GM12878 (cell line): ENCODE measurements at regions of chr11 and their contacts with region 1.

Region 1: GRCh38 chr11:73335204-73335923 is 27.3 kb downstream of the ARHGEF17 start:
- DNase-seq: no peak
- ATAC-seq: peak; percentile 78
- H3K4me3 ChIP-seq: no peak overlapping the region
- H3K27ac ChIP-seq: 0 out of 2 replicates have a peak overlapping the region, but pooled peaks have one; percentile 40
- H3K4me1 ChIP-seq: peaks cover 14% of the 10 kb centered on the region
- H3K27me3 ChIP-seq: no peaks in the 10 kb centered on the region
- CTCF ChIP-seq: peak; percentile 98 to 99 (median 98); a peak in 5 of 6 replicates
- EP300 ChIP-seq: 0 out of 4 replicates have a peak, but pooled peaks of 1 of the 2 experiments have one; percentile 8
- POLR2A ChIP-seq: no peak
- RAD21 ChIP-seq: peak; percentile 100

Region 2: GRCh38 chr11:73184953-73185671 is 150.3 kb before region 1 on chr11:
- CTCF ChIA-PET with region 1: interaction called, 26 read pairs
- POLR2A ChIA-PET with region 1: no interaction called
- RAD21 ChIA-PET with region 1: interaction called, 6 read pairs
- SMC1A ChIA-PET with region 1: interaction called, 5 read pairs
- in situ Hi-C with region 1: no loop called
- intact Hi-C with region 1: loop called (anchors 2 kb)
- DNase-seq: no peak
- ATAC-seq: peak; percentile 86
- H3K4me3 ChIP-seq: no peak overlapping the region
- H3K27ac ChIP-seq: no peak overlapping the region
- H3K4me1 ChIP-seq: peaks cover 26% of the 10 kb centered on the region
- H3K27me3 ChIP-seq: no peaks in the 10 kb centered on the region
- CTCF ChIP-seq: peak; percentile 96 to 97 (median 97); a peak in 5 of 6 replicates
- EP300 ChIP-seq: no peak
- POLR2A ChIP-seq: no peak
- RAD21 ChIP-seq: peak; percentile 82

Region 3: GRCh38 chr11:73242251-73243079 is 92.9 kb before region 1 on chr11:
- CTCF ChIA-PET with region 1: interaction called, 7 read pairs
- POLR2A ChIA-PET with region 1: no interaction called
- RAD21 ChIA-PET with region 1: interaction called, 7 read pairs
- SMC1A ChIA-PET with region 1: interaction called, 10 read pairs
- in situ Hi-C with region 1: no loop called
- intact Hi-C with region 1: loop called (anchors 1 kb)
- DNase-seq: peak; percentile 48
- ATAC-seq: peak; percentile 97
- H3K4me3 ChIP-seq: no peak overlapping the region
- H3K27ac ChIP-seq: peak overlapping the region; percentile 46
- H3K4me1 ChIP-seq: peaks cover 18% of the 10 kb centered on the region
- H3K27me3 ChIP-seq: no peaks in the 10 kb centered on the region
- CTCF ChIP-seq: peak; percentile 73 to 90 (median 80)
- EP300 ChIP-seq: no peak
- POLR2A ChIP-seq: peak; percentile 53
- RAD21 ChIP-seq: peak; percentile 89

Region 4: GRCh38 chr11:73295231-73295995 is 40.0 kb before region 1 on chr11:
- CTCF ChIA-PET with region 1: interaction called, 326 read pairs
- POLR2A ChIA-PET with region 1: interaction called, 3 read pairs
- RAD21 ChIA-PET with region 1: interaction called, 227 read pairs
- SMC1A ChIA-PET with region 1: interaction called, 31 read pairs
- in situ Hi-C with region 1: loop called (anchors 5 kb)
- intact Hi-C with region 1: loop called (anchors 1 kb)
- DNase-seq: peak; percentile 31
- ATAC-seq: peak; percentile 92
- H3K4me3 ChIP-seq: no peak overlapping the region
- H3K27ac ChIP-seq: no peak overlapping the region
- H3K4me1 ChIP-seq: no peaks in the 10 kb centered on the region
- H3K27me3 ChIP-seq: no peaks in the 10 kb centered on the region; a peak in 2 of 4 replicates
- CTCF ChIP-seq: peak; percentile 92 to 99 (median 98)
- EP300 ChIP-seq: no peak
- POLR2A ChIP-seq: no peak
- RAD21 ChIP-seq: peak; percentile 79

Region 5: DNA sequence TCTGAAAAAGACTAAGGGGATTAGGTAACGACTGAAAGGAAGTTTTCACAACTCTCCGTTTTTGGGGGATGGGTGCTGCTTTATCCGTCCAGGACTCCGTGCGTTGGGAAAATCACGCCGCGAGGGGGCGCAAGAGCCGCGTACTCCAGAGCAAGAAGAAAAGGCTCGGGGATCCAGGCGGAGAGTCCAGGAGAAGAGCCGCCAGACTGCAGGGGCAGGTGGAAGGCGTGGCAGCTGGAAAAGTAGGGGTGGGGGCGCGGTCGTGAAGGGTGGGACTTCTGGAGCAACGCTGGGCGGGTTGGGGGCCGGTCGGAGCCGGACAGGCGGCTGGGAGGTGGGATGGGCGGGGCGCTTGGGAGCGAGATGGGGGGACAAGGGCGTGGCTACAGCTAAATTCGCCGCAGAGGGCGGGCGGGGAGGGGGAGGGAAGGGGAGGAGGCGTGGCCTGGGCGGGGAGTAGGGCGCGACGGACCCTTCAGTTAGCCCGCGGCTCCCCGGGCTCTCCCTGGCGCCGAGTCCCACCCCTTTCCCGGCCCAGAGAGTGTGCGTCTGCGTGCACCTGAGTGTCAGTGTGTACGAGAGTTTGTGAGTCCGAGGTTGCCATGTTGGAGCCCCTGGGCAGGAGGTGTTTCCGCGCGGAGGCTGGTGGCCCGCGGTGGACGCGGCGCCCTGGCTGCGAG is 27.9 kb before region 1 on chr11:
- CTCF ChIA-PET with region 1: interaction called, 326 read pairs
- POLR2A ChIA-PET with region 1: interaction called, 26 read pairs
- RAD21 ChIA-PET with region 1: interaction called, 227 read pairs
- SMC1A ChIA-PET with region 1: interaction called, 134 read pairs
- in situ Hi-C with region 1: no loop called
- intact Hi-C with region 1: loop called (anchors 1 kb)
- DNase-seq: peak; percentile 75
- ATAC-seq: peak; percentile 85
- H3K4me3 ChIP-seq: peak overlapping the region; percentile 76
- H3K27ac ChIP-seq: peak overlapping the region; percentile 69
- H3K4me1 ChIP-seq: peaks cover 7% of the 10 kb centered on the region; the same call in 1 of the 2 replicates
- H3K27me3 ChIP-seq: no peaks in the 10 kb centered on the region
- CTCF ChIP-seq: peak; percentile 81 to 95 (median 83)
- EP300 ChIP-seq: no peak
- POLR2A ChIP-seq: peak; percentile 77
- RAD21 ChIP-seq: peak; percentile 94

Region 6: DNA sequence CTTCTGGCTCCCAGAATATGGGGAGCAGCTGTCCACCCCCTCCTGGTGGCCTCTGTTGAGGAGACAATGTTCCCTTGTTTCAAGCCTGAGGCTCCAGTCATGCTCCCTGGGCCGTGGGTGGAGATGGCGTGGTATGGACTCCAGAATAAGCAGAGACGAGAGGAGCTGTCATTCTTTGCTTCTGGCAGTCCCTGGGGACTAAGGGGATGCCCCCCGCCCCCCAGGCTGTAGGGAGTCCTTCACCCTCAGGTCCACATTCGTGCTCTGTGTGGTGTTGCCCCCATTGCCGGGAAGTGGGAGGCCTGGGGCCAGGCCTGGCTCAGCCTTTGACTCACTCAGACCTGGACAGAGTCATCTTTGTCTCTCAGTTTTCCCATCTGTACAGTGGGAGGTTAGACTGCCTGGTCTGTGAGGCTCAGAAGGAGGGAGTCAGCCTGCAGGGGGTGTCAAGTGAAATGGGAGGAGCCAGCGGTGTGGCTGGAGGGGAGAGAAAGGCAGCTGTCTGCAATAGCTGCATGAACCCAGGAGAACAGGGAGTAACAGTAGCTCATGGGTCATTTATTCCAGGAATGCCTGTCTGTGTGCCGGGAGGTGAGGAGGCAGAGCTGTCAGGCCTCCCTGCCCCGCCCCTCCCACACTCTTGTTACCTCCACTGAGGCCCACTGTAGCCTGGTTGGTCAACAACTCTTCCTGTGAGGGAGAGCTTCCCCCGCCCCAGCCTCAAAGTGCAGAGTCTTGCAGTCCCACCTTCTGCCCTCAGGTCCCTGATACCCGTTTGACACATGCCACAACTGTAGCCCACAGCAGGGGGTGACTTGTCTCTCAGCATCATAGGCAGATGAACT is 21.0 kb before region 1 on chr11:
- CTCF ChIA-PET with region 1: interaction called, 287 read pairs
- POLR2A ChIA-PET with region 1: interaction called, 6 read pairs
- RAD21 ChIA-PET with region 1: interaction called, 227 read pairs
- SMC1A ChIA-PET with region 1: interaction called, 134 read pairs
- in situ Hi-C with region 1: no loop called
- intact Hi-C with region 1: no loop called
- DNase-seq: no peak
- ATAC-seq: peak; percentile 73
- H3K4me3 ChIP-seq: peak overlapping the region; percentile 16
- H3K27ac ChIP-seq: peak overlapping the region; percentile 63
- H3K4me1 ChIP-seq: peaks cover 14% of the 10 kb centered on the region
- H3K27me3 ChIP-seq: no peaks in the 10 kb centered on the region
- CTCF ChIP-seq: no peak
- EP300 ChIP-seq: no peak
- POLR2A ChIP-seq: no peak
- RAD21 ChIP-seq: no peak

Region 7: GRCh38 chr11:73325036-73325981 is 10.1 kb before region 1 on chr11:
- CTCF ChIA-PET with region 1: interaction called, 29 read pairs
- POLR2A ChIA-PET with region 1: interaction called, 5 read pairs
- RAD21 ChIA-PET with region 1: interaction called, 22 read pairs
- SMC1A ChIA-PET with region 1: interaction called, 24 read pairs
- in situ Hi-C with region 1: no loop called
- intact Hi-C with region 1: no loop called
- DNase-seq: peak; percentile 83
- ATAC-seq: peak; percentile 83
- H3K4me3 ChIP-seq: peak overlapping the region; percentile 38; the same call in 1 of the 2 replicates
- H3K27ac ChIP-seq: peak overlapping the region; percentile 99
- H3K4me1 ChIP-seq: peaks cover 80% of the 10 kb centered on the region
- H3K27me3 ChIP-seq: no peaks in the 10 kb centered on the region
- CTCF ChIP-seq: no peak
- EP300 ChIP-seq: no peak; a peak in 2 of 4 replicates
- POLR2A ChIP-seq: peak; percentile 70
- RAD21 ChIP-seq: no peak